Endothelial cell of umbilical vein (primary cell): ENCODE measurements at regions of chr4 and their contacts with region 1.

Region 1: DNA sequence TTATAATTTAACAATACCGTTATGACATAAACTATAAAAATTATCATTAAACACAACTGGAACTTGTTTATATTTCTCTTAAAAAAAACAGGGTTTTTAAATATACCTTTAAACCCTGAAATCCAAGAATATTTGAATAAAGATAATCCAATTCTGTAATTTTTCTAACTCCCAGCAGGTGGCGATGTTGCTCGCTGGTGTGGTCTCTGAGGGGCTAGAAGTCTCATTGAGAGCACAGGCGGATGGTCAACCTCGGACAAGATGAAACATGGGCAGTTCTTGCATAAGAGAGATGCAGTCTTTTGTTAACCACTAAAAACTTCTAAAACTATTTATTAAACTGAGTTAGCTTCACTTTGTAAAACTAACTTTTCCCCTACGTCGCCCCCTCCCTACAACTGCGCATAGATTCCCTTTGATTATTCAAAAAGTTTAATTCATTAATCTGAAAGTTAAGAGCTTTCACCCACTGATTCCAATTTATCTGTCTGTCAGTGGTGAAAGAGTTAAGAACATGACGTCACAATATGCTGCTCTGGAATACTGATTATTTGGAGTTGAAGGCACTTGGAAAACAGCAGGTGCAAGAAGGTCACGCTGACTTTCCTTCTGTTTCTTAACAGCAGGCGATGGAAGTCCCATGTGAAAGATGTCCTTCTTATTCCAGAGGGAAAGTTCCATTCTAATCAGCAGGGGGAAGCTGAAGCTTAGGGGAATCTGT is 29.5 kb downstream of the DMP1 start:
- DNase-seq: peak; percentile 52
- H3K4me3 ChIP-seq: no peak overlapping the region
- H3K27ac ChIP-seq: no peak overlapping the region
- H3K4me1 ChIP-seq: no peaks in the 10 kb centered on the region
- H3K27me3 ChIP-seq: no peaks in the 10 kb centered on the region
- CTCF ChIP-seq: peak; percentile 61 to 76
- POLR2A ChIP-seq: no peak

Region 2: DNA sequence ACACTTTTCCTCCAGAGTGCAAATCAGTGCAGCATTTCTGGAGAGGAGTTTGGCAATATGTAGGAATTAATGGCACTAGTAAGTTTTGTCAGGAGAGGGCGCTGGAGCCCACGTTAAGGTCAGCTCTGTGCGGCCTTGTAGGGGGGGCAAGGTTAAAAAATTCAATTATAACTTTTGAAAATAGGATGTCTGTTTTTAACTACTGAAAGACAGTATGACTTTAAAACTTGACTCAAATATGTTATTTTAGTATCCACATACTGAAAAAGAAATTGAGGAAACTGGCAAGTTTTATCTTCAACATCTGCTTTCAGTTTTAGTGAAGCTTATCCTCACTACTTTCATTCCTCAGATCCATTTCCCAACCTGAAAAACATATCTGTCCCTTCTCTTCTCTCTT is 326.0 kb before region 1 on chr4:
- CTCF ChIA-PET with region 1: no interaction called
- POLR2A ChIA-PET with region 1: no interaction called
- dilution Hi-C with region 1: no loop called
- intact Hi-C with region 1: loop called (anchors 5 kb)
- DNase-seq: peak; percentile 67
- H3K4me3 ChIP-seq: no peak overlapping the region
- H3K27ac ChIP-seq: no peak overlapping the region
- H3K4me1 ChIP-seq: no peaks in the 10 kb centered on the region
- H3K27me3 ChIP-seq: no peaks in the 10 kb centered on the region
- CTCF ChIP-seq: peak; percentile 57
- POLR2A ChIP-seq: no peak

Region 3: GRCh38 chr4:87543835-87544461 is 135.7 kb before region 1 on chr4:
- CTCF ChIA-PET with region 1: interaction called, 4 read pairs
- POLR2A ChIA-PET with region 1: no interaction called
- dilution Hi-C with region 1: no loop called
- intact Hi-C with region 1: loop called (anchors 1 kb)
- DNase-seq: peak; percentile 48
- H3K4me3 ChIP-seq: no peak overlapping the region
- H3K27ac ChIP-seq: no peak overlapping the region
- H3K4me1 ChIP-seq: no peaks in the 10 kb centered on the region
- H3K27me3 ChIP-seq: peaks cover 0 to 3% of the 10 kb centered on the region in 2 experiments
- CTCF ChIP-seq: peak; percentile 29 to 47
- POLR2A ChIP-seq: no peak

Region 4: DNA sequence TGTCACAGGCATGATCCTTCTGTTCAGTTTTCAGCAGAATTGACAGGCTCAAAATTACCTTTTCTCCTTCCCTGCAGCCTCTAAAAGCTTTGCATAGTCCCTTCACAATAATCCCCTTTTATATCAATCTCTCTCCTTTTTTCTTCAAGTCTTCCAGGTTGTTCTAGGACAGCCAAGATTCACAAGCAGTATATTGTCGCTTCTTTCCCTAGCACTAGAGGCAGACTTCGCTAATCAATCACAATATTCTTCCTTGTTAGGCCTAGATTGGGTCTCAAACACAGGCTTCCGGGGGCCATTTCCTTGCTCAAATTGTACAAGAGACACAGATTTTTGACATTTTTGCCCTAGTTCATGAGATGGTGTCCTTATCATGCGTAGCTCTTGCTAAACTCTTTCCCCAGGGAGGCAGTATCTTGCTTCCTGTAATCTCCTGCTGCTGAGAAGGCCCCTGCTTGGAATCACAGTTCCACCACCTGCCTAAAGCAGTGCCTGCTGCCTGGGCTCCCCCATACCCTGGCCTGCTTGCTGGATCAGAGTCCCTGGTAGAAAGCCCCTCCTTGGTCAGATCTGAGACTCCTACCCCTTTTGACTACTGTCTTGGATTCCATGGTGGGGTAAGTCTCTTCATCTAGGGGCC is 27.8 kb after region 1 on chr4:
- CTCF ChIA-PET with region 1: no interaction called
- POLR2A ChIA-PET with region 1: no interaction called
- dilution Hi-C with region 1: no loop called
- intact Hi-C with region 1: no loop called
- DNase-seq: no peak
- H3K4me3 ChIP-seq: no peak overlapping the region
- H3K27ac ChIP-seq: no peak overlapping the region
- H3K4me1 ChIP-seq: no peaks in the 10 kb centered on the region
- H3K27me3 ChIP-seq: peaks cover 9 to 11% of the 10 kb centered on the region in 2 experiments
- CTCF ChIP-seq: no peak
- POLR2A ChIP-seq: no peak

Region 5: GRCh38 chr4:87799301-87800113 is 119.9 kb after region 1 on chr4 and contains the start of gene IBSP:
- CTCF ChIA-PET with region 1: no interaction called
- POLR2A ChIA-PET with region 1: no interaction called
- dilution Hi-C with region 1: no loop called
- intact Hi-C with region 1: no loop called
- DNase-seq: no peak
- H3K4me3 ChIP-seq: no peak within 1 kb of the TSS
- H3K27ac ChIP-seq: no peak within 1 kb of the TSS
- H3K4me1 ChIP-seq: no peaks in the 10 kb centered on the region
- H3K27me3 ChIP-seq: peaks cover 0 to 1% of the 10 kb centered on the region in 2 experiments
- CTCF ChIP-seq: no peak
- POLR2A ChIP-seq: no peak
- total RNA-seq, gene IBSP: not detected in 2 replicates

Region 6: DNA sequence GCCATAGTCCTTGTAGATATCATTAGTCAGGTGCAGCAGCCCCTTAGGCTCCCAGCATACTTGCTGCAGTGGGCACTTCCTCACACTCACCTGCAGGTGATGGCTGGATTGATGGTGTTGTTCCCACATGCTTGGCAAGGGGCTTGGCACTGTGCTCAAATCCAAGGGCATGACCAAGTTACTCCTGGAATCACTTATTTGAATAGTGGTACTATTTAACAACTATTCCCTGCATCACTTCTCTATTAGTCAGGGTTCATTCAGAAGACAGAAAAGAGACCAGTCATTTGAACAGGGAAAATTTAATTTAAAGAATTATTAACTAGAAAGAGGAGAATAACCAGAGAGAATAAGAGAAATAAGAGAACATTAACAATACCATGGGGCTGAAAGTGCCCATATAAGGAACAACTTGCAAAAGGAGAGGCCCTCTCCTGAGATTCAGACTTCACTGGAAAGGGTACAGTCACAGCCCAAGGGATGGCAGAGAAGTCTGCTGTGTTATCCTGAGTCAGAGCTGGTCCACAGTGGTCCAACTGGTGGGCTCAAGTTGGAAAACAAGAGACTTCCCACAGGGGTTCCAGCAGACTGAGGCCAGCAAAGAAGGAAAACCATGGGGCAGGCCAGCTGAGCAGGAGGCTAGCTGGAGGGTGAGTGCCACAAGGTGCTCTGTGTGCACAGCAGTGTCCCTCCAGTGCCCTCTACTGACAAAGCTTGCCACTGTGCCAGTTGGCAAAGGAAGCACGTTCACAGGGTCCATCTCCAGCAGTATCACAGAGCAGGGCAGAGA is 305.7 kb after region 1 on chr4:
- CTCF ChIA-PET with region 1: interaction called, 3 read pairs
- POLR2A ChIA-PET with region 1: no interaction called
- dilution Hi-C with region 1: no loop called
- intact Hi-C with region 1: loop called (anchors 5 kb)
- DNase-seq: peak; percentile 66
- H3K4me3 ChIP-seq: no peak overlapping the region
- H3K27ac ChIP-seq: no peak overlapping the region
- H3K4me1 ChIP-seq: no peaks in the 10 kb centered on the region
- H3K27me3 ChIP-seq: peaks cover 2 to 3% of the 10 kb centered on the region in 2 experiments
- CTCF ChIP-seq: peak; percentile 63 to 79
- POLR2A ChIP-seq: no peak